ENCODE measurements at regions of chr9 and their contacts with region 1.

Region 1: GRCh38 chr9:35790385-35791296 is 750 bp upstream of the NPR2 start:
- DNase-seq: peak; percentile 71
- H3K4me3 Mint-ChIP-seq: no peak overlapping the region
- H3K27ac Mint-ChIP-seq: no peak overlapping the region
- H3K4me1 Mint-ChIP-seq: peaks cover 7% of the 10 kb centered on the region
- H3K27me3 Mint-ChIP-seq: no peaks in the 10 kb centered on the region

Region 2: GRCh38 chr9:35805551-35805950 is 14.9 kb after region 1 on chr9:
- CTCF ChIA-PET with region 1: interaction called, 12 read pairs
- DNase-seq: no peak
- H3K4me3 Mint-ChIP-seq: no peak overlapping the region
- H3K27ac Mint-ChIP-seq: no peak overlapping the region
- H3K4me1 Mint-ChIP-seq: peaks cover 2% of the 10 kb centered on the region
- H3K27me3 Mint-ChIP-seq: no peaks in the 10 kb centered on the region

Region 3: GRCh38 chr9:35814841-35815543 is 24.4 kb after region 1 on chr9 and contains the start of gene HINT2:
- CTCF ChIA-PET with region 1: interaction called, 12 read pairs
- DNase-seq: peak; percentile 100
- H3K4me3 Mint-ChIP-seq: peak within 1 kb of the TSS; percentile 83
- H3K27ac Mint-ChIP-seq: peak within 1 kb of the TSS; percentile 97
- H3K4me1 Mint-ChIP-seq: peaks cover 47% of the 10 kb centered on the region
- H3K27me3 Mint-ChIP-seq: peaks cover 31% of the 10 kb centered on the region

Region 4: DNA sequence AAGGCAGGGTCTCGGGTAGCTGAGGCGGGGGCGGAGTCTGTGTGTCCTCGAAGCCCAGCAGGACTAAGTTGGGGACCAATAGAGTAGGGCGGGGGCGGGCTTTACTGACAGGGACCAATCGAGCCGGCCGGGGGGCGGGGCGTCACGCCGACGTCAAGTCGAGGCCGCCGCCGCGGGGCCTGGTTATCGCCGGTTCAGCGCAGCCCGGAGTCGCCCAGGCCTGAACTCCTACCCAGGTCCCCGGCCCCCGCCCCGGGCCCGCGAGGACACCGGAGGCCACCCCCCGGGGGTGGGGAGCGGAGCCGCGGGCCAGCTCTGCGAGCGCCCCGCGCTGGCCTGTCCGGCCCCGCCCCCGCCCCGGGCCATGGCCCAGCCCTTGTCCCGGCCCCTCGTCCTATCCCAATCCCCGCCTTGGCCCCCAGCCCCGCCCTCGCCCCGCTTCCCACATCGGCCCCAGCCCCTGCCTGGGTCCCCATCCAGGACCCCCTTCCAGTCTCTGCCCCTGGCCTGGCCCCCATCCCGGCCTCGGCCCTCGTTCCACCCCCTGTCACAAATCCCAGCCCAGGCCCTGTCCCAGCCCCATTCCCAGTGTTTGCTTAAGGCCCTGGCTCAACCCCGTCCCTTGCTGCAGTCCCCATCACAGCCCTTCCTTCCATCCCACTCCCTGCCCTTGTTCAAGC is 38.6 kb after region 1 on chr9 and contains the start of gene TMEM8B:
- CTCF ChIA-PET with region 1: interaction called, 97 read pairs
- DNase-seq: peak; percentile 97
- H3K4me3 Mint-ChIP-seq: peak within 1 kb of the TSS; percentile 91
- H3K27ac Mint-ChIP-seq: peak within 1 kb of the TSS; percentile 78
- H3K4me1 Mint-ChIP-seq: peaks cover 34% of the 10 kb centered on the region
- H3K27me3 Mint-ChIP-seq: peaks cover 33% of the 10 kb centered on the region

Region 5: DNA sequence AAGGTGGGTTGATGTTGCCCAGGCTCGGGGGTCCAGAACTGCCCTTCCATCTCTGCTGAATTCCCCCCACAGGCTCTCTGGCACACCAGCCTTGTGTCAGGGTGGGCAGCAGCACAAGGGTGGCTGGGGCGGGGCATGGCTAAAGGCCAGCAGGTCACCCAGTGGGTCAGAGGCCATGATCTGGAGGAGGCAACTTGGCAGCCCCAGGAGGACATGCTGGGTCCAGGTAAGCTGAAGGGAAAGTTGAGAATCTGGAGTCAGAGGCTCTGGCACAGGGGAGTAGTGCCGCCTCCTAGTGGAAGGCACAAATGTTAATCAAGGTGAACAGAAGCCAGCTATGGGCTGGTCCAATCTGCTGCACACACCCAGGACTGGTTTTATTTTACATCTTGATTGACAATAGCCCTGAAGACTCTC is 44.6 kb after region 1 on chr9:
- CTCF ChIA-PET with region 1: interaction called, 11 read pairs
- DNase-seq: peak; percentile 52
- H3K4me3 Mint-ChIP-seq: no peak overlapping the region
- H3K27ac Mint-ChIP-seq: no peak overlapping the region
- H3K4me1 Mint-ChIP-seq: peaks cover 10% of the 10 kb centered on the region
- H3K27me3 Mint-ChIP-seq: peaks cover 19% of the 10 kb centered on the region

Region 6: DNA sequence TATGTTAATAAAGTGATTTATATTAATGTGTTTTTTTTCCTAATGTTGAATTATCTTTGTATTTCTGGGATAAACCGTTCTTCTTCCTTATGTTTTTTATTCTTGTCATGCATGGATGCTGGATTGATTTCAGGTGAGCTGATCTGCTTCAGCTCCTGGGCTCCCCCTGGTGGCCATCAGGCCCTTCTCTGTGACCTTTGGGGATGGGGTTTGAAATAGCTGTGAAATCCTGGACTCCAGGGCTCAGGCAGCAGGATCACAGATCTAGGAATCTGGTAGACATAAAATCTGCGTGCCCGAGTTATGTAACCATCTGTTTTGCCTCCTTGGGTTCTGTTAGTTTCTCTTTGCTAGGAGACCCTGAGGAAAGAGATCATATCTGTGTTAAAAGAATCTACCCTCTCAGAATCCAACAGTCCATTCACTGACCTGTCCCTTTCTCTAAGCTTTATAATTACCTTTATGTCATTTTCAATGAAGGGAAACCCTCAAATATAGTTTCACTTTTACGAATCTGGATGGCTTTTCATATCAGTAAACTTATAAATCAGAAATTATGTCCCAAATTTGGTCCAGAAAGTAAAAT is 91.7 kb after region 1 on chr9:
- CTCF ChIA-PET with region 1: interaction called, 37 read pairs
- DNase-seq: peak; percentile 85
- H3K4me3 Mint-ChIP-seq: no peak overlapping the region
- H3K27ac Mint-ChIP-seq: no peak overlapping the region
- H3K4me1 Mint-ChIP-seq: no peaks in the 10 kb centered on the region
- H3K27me3 Mint-ChIP-seq: peaks cover 41% of the 10 kb centered on the region

Region 7: GRCh38 chr9:35914301-35914807 is 123.7 kb after region 1 on chr9:
- CTCF ChIA-PET with region 1: no interaction called
- DNase-seq: peak; percentile 48
- H3K4me3 Mint-ChIP-seq: no peak overlapping the region
- H3K27ac Mint-ChIP-seq: no peak overlapping the region
- H3K4me1 Mint-ChIP-seq: peaks cover 27% of the 10 kb centered on the region
- H3K27me3 Mint-ChIP-seq: no peaks in the 10 kb centered on the region

Region 8: GRCh38 chr9:35981699-35982098 is 191.1 kb after region 1 on chr9:
- CTCF ChIA-PET with region 1: no interaction called
- DNase-seq: no peak
- H3K4me3 Mint-ChIP-seq: no peak overlapping the region
- H3K27ac Mint-ChIP-seq: no peak overlapping the region
- H3K4me1 Mint-ChIP-seq: peaks cover 9% of the 10 kb centered on the region
- H3K27me3 Mint-ChIP-seq: peaks cover 25% of the 10 kb centered on the region

Region 9: GRCh38 chr9:36023260-36024048 is 232.8 kb after region 1 on chr9:
- CTCF ChIA-PET with region 1: interaction called, 13 read pairs
- DNase-seq: peak; percentile 81
- H3K4me3 Mint-ChIP-seq: no peak overlapping the region
- H3K27ac Mint-ChIP-seq: peak overlapping the region; percentile 7
- H3K4me1 Mint-ChIP-seq: no peaks in the 10 kb centered on the region
- H3K27me3 Mint-ChIP-seq: peaks cover 15% of the 10 kb centered on the region

Measured in activated naive CD4-positive, alpha-beta T cell treated with anti-CD3 and anti-CD28 coated beads, Interleukin-2, amount 10 ng/mL, durations not matched to agents 7 days and 5 days (primary cell).